ENCODE measurements at regions of chr6 and their contacts with region 1.

Region 1: DNA sequence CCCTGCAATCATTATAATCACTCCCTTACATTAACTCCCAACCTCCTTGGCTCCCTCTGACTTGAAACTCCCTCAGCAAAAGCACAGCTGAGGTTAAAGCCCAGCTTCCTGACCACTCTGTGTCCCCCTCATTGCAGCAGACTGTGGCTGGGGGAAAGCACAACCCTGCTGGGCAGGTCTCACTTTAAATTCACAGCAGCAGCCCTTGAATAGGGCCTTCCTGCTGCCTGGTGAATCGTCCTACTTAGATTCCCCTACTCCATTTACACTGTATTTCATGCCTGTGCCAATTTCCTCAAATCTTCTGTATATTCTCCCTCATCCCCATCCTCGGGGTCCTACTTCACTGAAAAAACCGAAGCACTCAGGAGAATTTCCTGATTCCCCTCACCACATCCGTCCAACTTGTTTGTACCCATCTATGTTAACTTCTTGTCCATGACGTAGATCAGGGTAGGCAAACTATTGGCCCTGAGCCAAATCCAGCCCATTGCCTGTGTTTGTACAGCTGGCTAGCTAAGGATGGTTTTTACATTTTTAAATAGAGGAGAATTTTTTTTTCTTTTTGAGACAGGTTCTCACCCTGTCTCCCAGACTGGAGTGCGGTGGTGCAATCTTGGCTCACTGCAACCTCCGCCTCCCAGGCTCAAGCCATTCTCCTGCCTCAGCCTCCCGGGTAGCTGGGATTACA is 31.5 kb upstream of the GCM1 start:
- DNase-seq: no peak
- ATAC-seq: no peak
- H3K4me3 ChIP-seq: no peak overlapping the region
- H3K27ac ChIP-seq: no peak overlapping the region
- H3K4me1 ChIP-seq: peaks cover 0 to 4% of the 10 kb centered on the region in 2 experiments; a peak in 2 of 5 replicates
- H3K27me3 ChIP-seq: peaks cover 0 to 15% of the 10 kb centered on the region in 2 experiments; a peak in 1 of 5 replicates
- CTCF ChIP-seq: no peak
- EP300 ChIP-seq: no peak
- POLR2A ChIP-seq: no peak
- RAD21 ChIP-seq: no peak

Region 2: GRCh38 chr6:53437557-53438202 is 257.6 kb after region 1 on chr6:
- CTCF ChIA-PET with region 1: no interaction called
- POLR2A ChIA-PET with region 1: no interaction called
- in situ Hi-C with region 1: loop called (anchors 25 kb)
- intact Hi-C with region 1: no loop called
- DNase-seq: peak; percentile 37 to 79 (median 52)
- ATAC-seq: peak; percentile 98
- H3K4me3 ChIP-seq: no peak overlapping the region
- H3K27ac ChIP-seq: no peak overlapping the region
- H3K4me1 ChIP-seq: peaks cover 0 to 4% of the 10 kb centered on the region in 2 experiments; a peak in 1 of 5 replicates
- H3K27me3 ChIP-seq: peaks cover 4 to 10% of the 10 kb centered on the region in 2 experiments; a peak in 2 of 5 replicates
- CTCF ChIP-seq: peak; percentile 85 to 96 (median 88)
- EP300 ChIP-seq: peak; percentile 32; the same call in 1 of the 2 replicates
- POLR2A ChIP-seq: no peak
- RAD21 ChIP-seq: peak; percentile 92 to 96

Measured in K562 (cell line).